ENCODE measurements at regions of chr12 and their contacts with region 1.

Region 1: GRCh38 chr12:55847603-55848291 is 5.0 kb upstream of the MMP19 start:
- DNase-seq: peak; percentile 96
- ATAC-seq: peak; percentile 95
- H3K4me3 ChIP-seq: no peak overlapping the region
- H3K27ac ChIP-seq: peak overlapping the region; percentile 97 to 100
- H3K4me1 ChIP-seq: peaks cover 0 to 2% of the 10 kb centered on the region in 2 donors
- H3K27me3 ChIP-seq: no peaks in the 10 kb centered on the region

Region 2: GRCh38 chr12:54502485-54502884 is 1345.3 kb before region 1 on chr12:
- intact Hi-C with region 1: no loop called
- DNase-seq: no peak
- ATAC-seq: no peak
- H3K4me3 ChIP-seq: no peak overlapping the region
- H3K27ac ChIP-seq: no peak overlapping the region
- H3K4me1 ChIP-seq: peaks cover 0 to 2% of the 10 kb centered on the region in 2 donors
- H3K27me3 ChIP-seq: no peaks in the 10 kb centered on the region

Region 3: DNA sequence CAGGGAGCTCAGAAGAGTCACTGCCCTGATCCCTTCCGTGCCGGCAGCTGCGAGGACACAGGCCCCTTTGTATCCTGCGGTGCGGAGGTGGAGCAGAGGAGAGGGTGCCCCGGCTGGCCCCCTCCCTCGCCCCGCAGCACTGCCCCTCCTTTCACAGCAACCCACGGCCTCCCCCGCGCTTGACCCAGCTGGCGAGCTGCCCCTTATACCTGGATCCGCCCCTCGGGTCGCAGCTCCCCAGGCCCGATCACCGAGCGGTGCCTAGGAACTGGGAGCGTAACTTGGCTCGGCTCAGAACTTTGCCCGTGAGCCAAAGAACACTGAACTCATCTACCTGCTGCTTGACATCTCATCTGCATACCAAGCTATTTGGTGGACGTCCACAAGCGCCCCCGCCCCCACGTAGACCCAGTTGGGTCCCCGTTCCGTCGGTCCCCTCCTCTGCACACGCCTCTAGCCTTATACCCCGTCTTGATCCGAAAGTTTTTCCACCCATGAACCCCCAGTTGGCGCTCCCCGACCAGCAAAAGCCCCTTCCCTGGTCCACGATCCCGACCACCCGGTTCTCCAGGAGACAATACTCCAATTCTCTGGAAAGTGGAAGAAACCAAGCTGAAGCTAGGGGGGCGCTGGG is 17.7 kb before region 1 on chr12:
- intact Hi-C with region 1: loop called in 1 of 2 experiments (anchors 1 kb)
- DNase-seq: peak; percentile 69 to 86
- ATAC-seq: peak; percentile 57
- H3K4me3 ChIP-seq: peak overlapping the region; percentile 77 to 79
- H3K27ac ChIP-seq: peak overlapping the region; percentile 78 to 91
- H3K4me1 ChIP-seq: peaks cover 0 to 3% of the 10 kb centered on the region in 2 donors
- H3K27me3 ChIP-seq: no peaks in the 10 kb centered on the region